ENCODE measurements at regions of chr10 and their contacts with region 1.

Region 1: GRCh38 chr10:67779465-67780203 is 58.4 kb downstream of the DNAJC12 start:
- DNase-seq: peak in 4 of 5 donors; percentile 48 to 70 (median 57)
- ATAC-seq: peak; percentile 58 to 87 (median 80)
- H3K4me3 ChIP-seq: peak overlapping the region in 1 of 12 donors; percentile 18
- H3K27ac ChIP-seq: no peak overlapping the region
- H3K4me1 ChIP-seq: peaks cover 0 to 13% (median 0%) of the 10 kb centered on the region in 12 donors
- H3K27me3 ChIP-seq: no peaks in the 10 kb centered on the region
- CTCF ChIP-seq: peak; percentile 73 to 90 (median 82)
- POLR2A ChIP-seq: no peak

Region 2: DNA sequence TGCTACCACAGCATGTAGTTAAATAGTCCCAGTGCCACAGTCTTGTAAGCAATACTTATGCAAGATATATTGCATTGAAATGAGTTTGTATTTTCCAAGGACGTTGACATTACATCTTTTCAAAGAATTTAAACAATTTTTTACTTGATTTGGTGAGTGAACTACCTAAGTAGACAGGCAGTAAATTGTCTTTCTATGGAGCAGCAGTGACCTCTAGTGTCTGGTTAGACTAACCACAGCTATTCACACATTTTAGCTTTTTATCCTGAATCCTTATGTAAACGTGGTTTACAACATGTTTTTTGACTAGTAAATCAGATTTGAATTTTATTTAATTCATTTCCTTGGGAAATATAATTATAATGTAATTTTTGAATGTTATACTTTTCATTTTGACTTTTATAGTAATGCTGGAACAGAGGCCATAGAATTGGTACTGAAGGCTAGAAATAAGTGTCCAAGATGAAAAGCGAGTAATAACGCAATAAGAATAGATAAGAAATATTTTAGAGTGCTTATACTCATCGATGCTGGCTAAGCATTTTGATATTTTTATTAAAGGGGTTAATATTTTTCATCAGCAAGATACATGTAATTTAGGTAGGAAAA is 848.2 kb before region 1 on chr10:
- intact Hi-C with region 1: loop called in 1 of 10 experiments (anchors 5 kb)
- DNase-seq: no peak
- ATAC-seq: peak in 3 of 4 donors; percentile 45 to 57 (median 57)
- H3K4me3 ChIP-seq: no peak overlapping the region
- H3K27ac ChIP-seq: no peak overlapping the region
- H3K4me1 ChIP-seq: peaks cover 0 to 10% (median 0%) of the 10 kb centered on the region in 12 donors
- H3K27me3 ChIP-seq: peaks cover 0 to 41% (median 4%) of the 10 kb centered on the region in 9 donors
- CTCF ChIP-seq: peak; percentile 54 to 86 (median 76)
- POLR2A ChIP-seq: no peak

Region 3: GRCh38 chr10:66941491-66941890 is 838.1 kb before region 1 on chr10:
- intact Hi-C with region 1: loop called in 1 of 10 experiments (anchors 10 kb)
- DNase-seq: no peak
- ATAC-seq: no peak
- H3K4me3 ChIP-seq: no peak overlapping the region
- H3K27ac ChIP-seq: no peak overlapping the region
- H3K4me1 ChIP-seq: no peaks in the 10 kb centered on the region
- H3K27me3 ChIP-seq: no peaks in the 10 kb centered on the region
- CTCF ChIP-seq: no peak
- POLR2A ChIP-seq: no peak

Region 4: DNA sequence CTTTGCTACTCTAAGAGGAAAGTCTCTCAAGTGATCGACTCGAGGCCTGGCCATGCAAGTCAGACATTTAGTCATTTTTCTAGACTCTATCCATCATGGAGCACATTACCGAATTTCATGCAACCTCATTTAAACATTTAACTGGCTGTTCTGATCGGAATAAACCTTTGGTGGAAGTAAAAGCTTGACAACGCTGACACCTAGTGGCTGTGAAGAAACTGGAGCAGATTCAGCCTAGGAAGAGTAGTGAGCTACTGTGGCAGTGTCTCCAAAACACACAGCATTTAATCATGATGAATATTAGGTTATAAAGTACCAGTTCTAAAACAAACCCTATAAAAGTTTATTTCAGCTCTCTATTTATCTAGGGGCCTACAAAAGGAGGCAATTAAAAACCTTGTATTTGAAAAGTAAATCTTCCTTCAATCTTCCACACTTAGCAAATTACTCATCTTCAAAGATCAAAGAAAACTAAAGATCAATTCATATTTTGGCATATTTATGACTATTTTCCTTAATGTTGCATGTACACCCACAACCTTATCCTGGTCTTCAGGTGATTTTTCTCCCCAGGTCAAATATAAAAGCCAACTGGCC is 258.6 kb before region 1 on chr10:
- intact Hi-C with region 1: loop called in 2 of 10 experiments (anchors 10 kb)
- DNase-seq: peak in 2 of 5 donors; percentile 8 to 31
- ATAC-seq: peak; percentile 58 to 79 (median 74)
- H3K4me3 ChIP-seq: no peak overlapping the region
- H3K27ac ChIP-seq: no peak overlapping the region
- H3K4me1 ChIP-seq: peaks cover 0 to 4% (median 0%) of the 10 kb centered on the region in 12 donors
- H3K27me3 ChIP-seq: no peaks in the 10 kb centered on the region
- CTCF ChIP-seq: peak; percentile 44 to 78 (median 67)
- POLR2A ChIP-seq: no peak

Region 5: GRCh38 chr10:67666416-67667034 is 113.1 kb before region 1 on chr10:
- intact Hi-C with region 1: loop called in 8 of 10 experiments (anchors 1 to 10 kb)
- DNase-seq: no peak
- ATAC-seq: peak in 2 of 4 donors; percentile 56 to 57
- H3K4me3 ChIP-seq: no peak overlapping the region
- H3K27ac ChIP-seq: peak overlapping the region in 8 of 12 donors; percentile 41 to 72 (median 52)
- H3K4me1 ChIP-seq: peaks cover 0 to 52% (median 22%) of the 10 kb centered on the region in 12 donors
- H3K27me3 ChIP-seq: no peaks in the 10 kb centered on the region
- CTCF ChIP-seq: peak; percentile 31 to 65 (median 49)
- POLR2A ChIP-seq: no peak

Region 6: DNA sequence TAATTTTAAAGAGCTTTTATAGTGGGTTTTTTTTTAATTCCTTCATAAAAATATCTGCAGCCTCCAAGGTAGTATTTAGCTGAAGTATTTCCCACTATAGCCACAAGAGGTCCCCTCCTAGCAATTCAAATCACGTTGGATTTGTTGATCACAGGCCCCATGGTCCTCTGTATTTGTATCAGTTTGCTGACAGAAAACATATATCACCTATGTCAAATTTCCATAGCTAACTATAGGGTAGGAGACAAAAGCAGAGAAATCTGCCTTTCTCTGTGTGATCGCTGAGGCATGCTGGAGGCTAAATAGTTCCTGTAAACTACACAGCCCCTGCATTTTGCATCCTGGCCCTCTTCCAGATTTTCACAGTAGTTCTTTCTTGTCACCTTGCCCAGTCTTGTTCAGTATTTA is 81.9 kb before region 1 on chr10:
- intact Hi-C with region 1: loop called (anchors 1 to 5 kb)
- DNase-seq: peak in 1 of 5 donors; percentile 10
- ATAC-seq: peak in 2 of 4 donors; percentile 50 to 64
- H3K4me3 ChIP-seq: no peak overlapping the region
- H3K27ac ChIP-seq: peak overlapping the region in 3 of 12 donors; percentile 83 to 91 (median 88)
- H3K4me1 ChIP-seq: peaks cover 0 to 21% (median 4%) of the 10 kb centered on the region in 12 donors
- H3K27me3 ChIP-seq: peaks cover 0 to 7% (median 0%) of the 10 kb centered on the region in 9 donors
- CTCF ChIP-seq: peak; percentile 49 to 77 (median 68)
- POLR2A ChIP-seq: no peak